ENCODE measurements at regions of chr1 and their contacts with region 1.

Region 1: GRCh38 chr1:19974822-19975416 is 4.5 kb downstream of the PLA2G2A start:
- DNase-seq: peak; percentile 58
- ATAC-seq: peak; percentile 80 to 83

Region 2: DNA sequence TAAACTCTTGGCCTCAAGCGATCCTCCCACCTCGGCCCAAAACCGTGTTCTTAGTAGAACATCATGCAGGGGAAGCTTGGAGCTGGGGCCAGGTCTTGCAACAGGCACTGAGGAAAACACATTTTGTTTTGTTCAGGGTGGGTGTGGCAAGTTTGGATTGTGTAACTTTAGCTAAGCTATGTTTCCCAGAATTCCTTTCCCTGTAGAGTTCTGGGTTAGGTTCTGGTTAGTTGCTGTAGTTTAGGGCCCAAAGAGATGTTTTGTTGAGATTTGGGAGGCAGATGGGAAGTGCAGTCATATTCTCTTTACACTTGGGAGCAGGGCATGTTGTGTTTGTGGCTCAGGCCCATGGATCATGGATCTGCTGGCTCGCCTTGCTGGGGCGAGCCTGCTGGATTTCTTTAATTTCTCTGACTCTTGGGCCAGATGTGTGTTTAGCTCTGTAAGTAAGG is 119.0 kb after region 1 on chr1:
- intact Hi-C with region 1: loop called (anchors 5 to 10 kb)
- DNase-seq: peak; percentile 76
- ATAC-seq: peak; percentile 67 to 85

Region 3: DNA sequence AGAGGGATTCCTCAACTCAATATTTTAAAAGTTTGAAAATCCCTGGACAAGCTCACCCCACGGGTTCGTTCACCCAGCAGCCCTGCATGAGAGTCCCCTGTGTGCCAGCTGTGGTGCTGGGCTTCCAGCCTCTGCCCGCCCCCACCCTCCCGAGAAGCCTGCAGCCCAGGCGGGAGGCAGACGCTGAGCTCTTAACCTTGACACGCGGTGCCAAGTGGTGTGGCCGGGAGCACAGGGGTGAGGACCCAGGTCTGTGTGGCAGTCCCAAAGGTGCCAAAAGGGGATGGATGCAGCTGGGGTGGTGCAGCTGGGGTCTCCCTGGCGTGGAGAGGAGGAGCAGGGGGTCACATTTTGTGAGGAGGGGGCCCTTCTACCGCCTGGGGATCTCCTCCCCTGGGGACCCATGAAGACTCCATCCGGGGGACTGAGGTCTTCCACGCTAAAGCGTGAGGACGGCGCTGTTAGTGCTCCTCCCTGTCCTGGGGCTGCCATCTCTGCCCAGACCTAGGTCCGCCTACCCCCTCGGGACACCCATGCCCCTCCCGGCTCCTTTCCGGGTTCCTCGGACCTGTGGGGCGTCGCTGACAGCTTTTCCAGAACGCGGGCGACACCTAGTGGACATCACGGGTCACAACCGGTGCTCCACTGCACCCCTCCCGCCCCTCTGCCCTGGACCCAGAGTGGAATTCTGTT is 177.1 kb after region 1 on chr1:
- intact Hi-C with region 1: loop called (anchors 2 to 10 kb)
- DNase-seq: peak; percentile 90
- ATAC-seq: peak; percentile 91 to 93

Measured in left cardiac atrium (tissue), 4 donors.